Psoas muscle (tissue), 8 donors: ENCODE measurements at regions of chr1 and their contacts with region 1.

Region 1: GRCh38 chr1:115314766-115315165 is 23.3 kb downstream of the NGF start:
- DNase-seq: no peak
- ATAC-seq: no peak
- H3K4me3 ChIP-seq: no peak overlapping the region
- H3K27ac ChIP-seq: no peak overlapping the region
- H3K4me1 ChIP-seq: no peaks in the 10 kb centered on the region
- H3K27me3 ChIP-seq: no peaks in the 10 kb centered on the region
- CTCF ChIP-seq: no peak

Region 2: GRCh38 chr1:115302390-115302961 is 12.3 kb before region 1 on chr1:
- intact Hi-C with region 1: loop called in 1 of 2 experiments (anchors 1 kb)
- DNase-seq: no peak
- ATAC-seq: peak in 1 of 4 donors; percentile 19
- H3K4me3 ChIP-seq: no peak overlapping the region
- H3K27ac ChIP-seq: no peak overlapping the region
- H3K4me1 ChIP-seq: no peaks in the 10 kb centered on the region
- H3K27me3 ChIP-seq: no peaks in the 10 kb centered on the region
- CTCF ChIP-seq: no peak